CD4-positive, alpha-beta T cell (primary cell): ENCODE measurements at regions of chr17 and their contacts with region 1.

Region 1: DNA sequence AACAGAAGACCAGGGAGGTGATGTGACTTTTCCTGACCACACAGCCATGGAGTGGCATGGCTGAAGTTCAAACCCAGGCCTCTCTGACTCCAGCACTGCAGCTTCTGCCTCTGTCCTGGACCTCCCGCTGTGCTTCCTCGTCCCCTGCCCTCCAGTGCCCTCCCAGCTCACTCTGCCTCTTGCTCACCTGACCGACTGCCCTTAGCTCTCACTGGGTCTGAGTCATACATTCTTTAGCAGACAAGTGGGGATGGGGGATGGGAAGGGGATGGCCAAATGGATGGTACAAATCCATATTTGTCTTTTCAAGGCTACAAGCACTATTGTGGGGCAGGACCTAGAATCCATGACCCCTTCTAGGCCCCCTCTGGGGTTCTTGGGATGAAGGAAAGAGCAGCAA is 33.0 kb downstream of the PITPNM3 start:
- DNase-seq: no peak
- ATAC-seq: no peak
- H3K4me3 ChIP-seq: no peak overlapping the region
- H3K4me3 Mint-ChIP-seq: no peak overlapping the region
- H3K27ac ChIP-seq: no peak overlapping the region
- H3K27ac Mint-ChIP-seq: no peak overlapping the region
- H3K4me1 ChIP-seq: no peaks in the 10 kb centered on the region
- H3K4me1 Mint-ChIP-seq: no peaks in the 10 kb centered on the region
- H3K27me3 ChIP-seq: no peaks in the 10 kb centered on the region
- H3K27me3 Mint-ChIP-seq: no peaks in the 10 kb centered on the region
- CTCF ChIP-seq: no peak

Region 2: DNA sequence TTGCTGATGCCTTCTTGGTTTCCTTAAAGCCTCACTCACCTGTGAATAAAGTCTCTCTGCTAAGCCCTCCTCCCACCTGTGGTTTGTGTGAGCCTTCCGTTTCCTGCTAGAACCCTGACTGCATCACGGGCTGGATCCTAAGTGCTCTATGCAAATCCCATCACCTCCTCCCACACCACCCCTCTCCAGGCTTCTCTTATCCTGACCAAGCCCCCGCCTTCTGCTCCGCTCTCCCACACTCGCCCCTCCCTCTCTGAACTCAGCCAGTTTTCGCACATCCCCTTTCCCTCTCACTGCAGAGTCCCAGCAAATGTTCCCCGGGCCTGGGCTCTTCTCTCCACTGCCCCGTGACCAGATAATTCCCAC is 27.2 kb before region 1 on chr17:
- CTCF ChIA-PET with region 1: no interaction called
- POLR2A ChIA-PET with region 1: no interaction called
- intact Hi-C with region 1: no loop called
- DNase-seq: peak in 3 of 14 experiments; percentile 1 to 27 (median 19)
- ATAC-seq: peak; percentile 24
- H3K4me3 ChIP-seq: no peak overlapping the region
- H3K4me3 Mint-ChIP-seq: peak overlapping the region; percentile 62
- H3K27ac ChIP-seq: no peak overlapping the region
- H3K27ac Mint-ChIP-seq: no peak overlapping the region
- H3K4me1 ChIP-seq: peaks cover 14% of the 10 kb centered on the region
- H3K4me1 Mint-ChIP-seq: peaks cover 16% of the 10 kb centered on the region
- H3K27me3 ChIP-seq: no peaks in the 10 kb centered on the region
- H3K27me3 Mint-ChIP-seq: no peaks in the 10 kb centered on the region
- CTCF ChIP-seq: no peak

Region 3: DNA sequence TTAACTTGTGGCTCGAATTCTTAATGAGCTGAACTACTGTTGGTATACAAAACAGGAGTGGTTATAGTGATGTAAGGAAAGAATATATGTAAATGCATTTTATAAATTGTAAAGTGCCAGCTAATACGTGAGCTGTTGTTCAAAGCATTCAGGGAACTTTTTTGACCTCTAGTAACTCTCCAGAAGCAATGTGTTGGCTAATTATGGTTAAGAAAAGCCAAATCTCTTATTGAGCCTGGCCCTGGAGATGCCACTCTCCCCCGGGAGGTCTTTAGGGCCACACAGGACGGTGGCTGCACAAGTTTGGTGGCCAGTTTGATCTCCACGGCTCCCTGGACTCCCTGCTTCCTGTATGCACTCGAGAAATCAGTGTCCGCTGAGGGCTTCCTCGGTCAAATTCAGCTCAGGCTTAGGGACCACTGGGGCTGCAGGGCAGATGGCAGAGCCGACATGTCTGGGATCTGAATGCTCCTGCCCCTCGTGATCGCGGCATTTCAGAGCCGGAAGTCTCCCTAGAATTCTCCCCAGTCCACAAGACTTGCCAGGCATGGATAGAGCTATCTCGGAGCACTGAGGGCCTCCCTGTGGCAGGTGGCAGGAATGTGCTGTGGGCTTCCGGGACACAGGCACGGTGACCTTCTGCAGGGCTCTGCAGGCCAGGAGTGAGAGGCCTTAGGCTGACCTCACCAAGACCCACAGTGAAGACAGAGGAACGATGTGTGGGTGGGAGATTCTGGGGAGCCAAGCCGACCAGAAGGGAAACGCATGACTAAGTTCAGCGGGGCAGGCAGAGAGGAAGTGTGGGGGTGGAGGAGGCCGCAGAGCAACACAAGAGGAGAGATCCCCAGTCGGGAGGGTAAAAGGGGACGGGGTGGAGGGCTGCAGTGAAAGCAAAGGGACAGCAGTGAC is 51.6 kb after region 1 on chr17:
- CTCF ChIA-PET with region 1: no interaction called
- POLR2A ChIA-PET with region 1: no interaction called
- intact Hi-C with region 1: loop called in 1 of 2 experiments (anchors 5 kb)
- DNase-seq: peak in 7 of 14 experiments; percentile 9 to 54 (median 19)
- ATAC-seq: peak; percentile 44
- H3K4me3 ChIP-seq: no peak overlapping the region
- H3K4me3 Mint-ChIP-seq: no peak overlapping the region
- H3K27ac ChIP-seq: no peak overlapping the region
- H3K27ac Mint-ChIP-seq: peak overlapping the region; percentile 4
- H3K4me1 ChIP-seq: peaks cover 16% of the 10 kb centered on the region
- H3K4me1 Mint-ChIP-seq: peaks cover 15% of the 10 kb centered on the region
- H3K27me3 ChIP-seq: no peaks in the 10 kb centered on the region
- H3K27me3 Mint-ChIP-seq: no peaks in the 10 kb centered on the region
- CTCF ChIP-seq: no peak

Region 4: GRCh38 chr17:6599364-6599763 is 76.0 kb after region 1 on chr17:
- CTCF ChIA-PET with region 1: no interaction called
- POLR2A ChIA-PET with region 1: no interaction called
- intact Hi-C with region 1: no loop called
- DNase-seq: peak in 3 of 14 experiments; percentile 6 to 20 (median 9)
- ATAC-seq: no peak
- H3K4me3 ChIP-seq: no peak overlapping the region
- H3K4me3 Mint-ChIP-seq: no peak overlapping the region
- H3K27ac ChIP-seq: no peak overlapping the region
- H3K27ac Mint-ChIP-seq: no peak overlapping the region
- H3K4me1 ChIP-seq: no peaks in the 10 kb centered on the region
- H3K4me1 Mint-ChIP-seq: no peaks in the 10 kb centered on the region
- H3K27me3 ChIP-seq: no peaks in the 10 kb centered on the region
- H3K27me3 Mint-ChIP-seq: no peaks in the 10 kb centered on the region
- CTCF ChIP-seq: no peak